Activated T-helper 1 cell treated with anti-CD3 and anti-CD28 coated beads, Interleukin-12 subunit alpha, Interleukin-12 subunit beta, Interleukin-2, Interleukin-4 antibody, amounts not matched to agents 30 ng/mL and 10 ng/mL and 1 ng/mL, durations not matched to agents 14 hours and 24 hours and 36 hours (primary cell): ENCODE measurements at regions of chr1 and their contacts with region 1.

Region 1: GRCh38 chr1:31548907-31549808 is 27.2 kb upstream of the TINAGL1 start:
- DNase-seq: peak; percentile 82
- H3K4me3 Mint-ChIP-seq: peak overlapping the region; percentile 27
- H3K27ac Mint-ChIP-seq: no peak overlapping the region
- H3K4me1 Mint-ChIP-seq: peaks cover 12% of the 10 kb centered on the region
- H3K27me3 Mint-ChIP-seq: peaks cover 9% of the 10 kb centered on the region

Region 2: GRCh38 chr1:31182352-31182751 is 366.8 kb before region 1 on chr1:
- intact Hi-C with region 1: loop called (anchors 1 kb)
- DNase-seq: peak; percentile 37
- H3K4me3 Mint-ChIP-seq: peak overlapping the region; percentile 22
- H3K27ac Mint-ChIP-seq: no peak overlapping the region
- H3K4me1 Mint-ChIP-seq: no peaks in the 10 kb centered on the region
- H3K27me3 Mint-ChIP-seq: peaks cover 22% of the 10 kb centered on the region

Region 3: GRCh38 chr1:31394628-31395193 is 154.4 kb before region 1 on chr1:
- intact Hi-C with region 1: loop called (anchors 1 kb)
- DNase-seq: peak; percentile 61
- H3K4me3 Mint-ChIP-seq: peak overlapping the region; percentile 80
- H3K27ac Mint-ChIP-seq: no peak overlapping the region
- H3K4me1 Mint-ChIP-seq: peaks cover 10% of the 10 kb centered on the region
- H3K27me3 Mint-ChIP-seq: peaks cover 11% of the 10 kb centered on the region

Region 4: GRCh38 chr1:31422505-31423319 is 126.4 kb before region 1 on chr1:
- intact Hi-C with region 1: loop called (anchors 1 kb)
- DNase-seq: peak; percentile 26
- H3K4me3 Mint-ChIP-seq: no peak overlapping the region
- H3K27ac Mint-ChIP-seq: peak overlapping the region; percentile 34
- H3K4me1 Mint-ChIP-seq: peaks cover 7% of the 10 kb centered on the region
- H3K27me3 Mint-ChIP-seq: peaks cover 20% of the 10 kb centered on the region

Region 5: GRCh38 chr1:31460027-31460426 is 89.1 kb before region 1 on chr1:
- intact Hi-C with region 1: loop called (anchors 5 kb)
- DNase-seq: no peak
- H3K4me3 Mint-ChIP-seq: no peak overlapping the region
- H3K27ac Mint-ChIP-seq: no peak overlapping the region
- H3K4me1 Mint-ChIP-seq: no peaks in the 10 kb centered on the region
- H3K27me3 Mint-ChIP-seq: peaks cover 4% of the 10 kb centered on the region

Region 6: DNA sequence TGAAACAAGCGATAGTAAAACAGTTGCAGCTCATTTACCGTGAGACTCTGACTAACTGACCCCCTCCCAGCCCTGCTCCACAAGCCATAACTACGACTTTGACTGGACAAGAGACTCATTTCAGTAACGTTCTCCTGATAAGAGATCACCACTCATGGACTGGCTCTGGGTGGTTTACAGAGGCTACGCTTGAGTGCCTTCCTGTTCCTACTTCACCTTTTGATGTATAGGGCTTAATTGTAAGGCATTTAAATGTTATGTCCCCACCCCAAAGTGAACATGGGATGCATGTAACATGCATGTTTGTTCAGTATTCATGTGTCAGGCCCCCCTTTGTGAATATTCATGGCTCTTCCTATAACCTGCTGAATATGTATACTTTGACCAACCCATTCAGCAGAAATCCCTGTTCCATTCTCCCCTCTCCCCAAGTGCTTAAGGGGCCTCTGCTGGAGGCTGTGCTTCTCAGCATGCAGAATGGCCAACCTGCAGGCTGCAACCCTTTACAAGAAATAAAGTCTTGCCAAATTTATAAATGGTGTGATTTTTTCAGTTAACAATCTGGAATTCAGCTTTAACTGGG is 317.4 kb after region 1 on chr1:
- intact Hi-C with region 1: no loop called
- DNase-seq: no peak
- H3K4me3 Mint-ChIP-seq: no peak overlapping the region
- H3K27ac Mint-ChIP-seq: no peak overlapping the region
- H3K4me1 Mint-ChIP-seq: peaks cover under 1% of the 10 kb centered on the region
- H3K27me3 Mint-ChIP-seq: peaks cover 6% of the 10 kb centered on the region